RWPE1 (cell line): ENCODE measurements at regions of chr14 and their contacts with region 1.

Region 1: DNA sequence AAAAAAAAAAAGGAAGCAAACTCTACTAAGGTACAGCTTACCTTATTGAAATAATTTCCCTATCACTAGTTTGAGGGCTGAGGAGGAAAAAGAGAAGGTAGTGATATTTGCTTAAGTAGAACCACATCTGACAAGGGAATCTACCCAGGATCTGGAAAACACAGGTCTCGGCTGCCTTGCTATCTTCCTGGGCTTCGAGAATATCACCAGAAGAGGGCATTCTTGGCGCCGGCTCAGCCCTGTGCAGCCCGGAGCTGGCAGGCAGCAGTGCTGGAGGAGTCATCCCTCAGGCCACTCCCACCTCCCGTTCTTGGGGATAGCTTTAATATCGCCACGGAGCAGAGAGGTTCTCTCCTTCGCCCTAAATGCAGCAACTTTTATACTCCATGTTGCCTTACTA is 1181.2 kb downstream of the VRK1 start:
- DNase-seq: peak; percentile 81
- H3K27ac ChIP-seq: peak overlapping the region; percentile 93
- CTCF ChIP-seq: peak; percentile 71

Region 2: GRCh38 chr14:97946287-97946639 is 32.1 kb before region 1 on chr14:
- CTCF ChIA-PET with region 1: no interaction called
- POLR2A ChIA-PET with region 1: no interaction called
- DNase-seq: no peak
- H3K27ac ChIP-seq: no peak overlapping the region
- CTCF ChIP-seq: no peak

Region 3: GRCh38 chr14:98798099-98798498 is 819.8 kb after region 1 on chr14:
- CTCF ChIA-PET with region 1: interaction called, 10 read pairs
- POLR2A ChIA-PET with region 1: no interaction called
- DNase-seq: no peak
- H3K27ac ChIP-seq: no peak overlapping the region
- CTCF ChIP-seq: no peak